OCI-LY7 (cell line): ENCODE measurements at regions of chr19 and their contacts with region 1.

Region 1: GRCh38 chr19:5057861-5058260 is 88.9 kb downstream of the KDM4B start:
- DNase-seq: peak; percentile 41
- H3K4me3 ChIP-seq: no peak overlapping the region
- H3K27ac ChIP-seq: no peak overlapping the region
- H3K4me1 ChIP-seq: no peaks in the 10 kb centered on the region
- CTCF ChIP-seq: no peak

Region 2: DNA sequence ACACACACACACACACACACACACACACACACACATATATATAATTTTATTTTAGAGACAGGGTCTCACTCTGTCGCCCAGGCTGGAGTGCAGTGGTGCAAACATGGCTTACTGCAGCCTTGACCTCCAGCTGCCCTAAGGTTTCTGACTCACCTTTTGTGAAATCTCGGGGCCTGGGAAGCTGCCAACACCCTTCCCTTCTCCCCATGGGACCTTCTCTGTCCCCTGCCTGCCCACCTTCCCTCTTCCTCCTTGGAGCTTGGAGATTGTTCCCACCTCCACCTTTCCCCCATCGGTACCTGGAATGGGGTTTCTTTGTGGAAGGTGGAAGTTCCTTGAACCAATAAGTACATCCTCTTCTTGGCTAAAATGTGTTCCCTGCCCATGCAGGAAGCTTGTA is 161.5 kb before region 1 on chr19:
- CTCF ChIA-PET with region 1: no interaction called
- POLR2A ChIA-PET with region 1: no interaction called
- intact Hi-C with region 1: no loop called
- DNase-seq: no peak
- H3K4me3 ChIP-seq: no peak overlapping the region
- H3K27ac ChIP-seq: no peak overlapping the region
- H3K4me1 ChIP-seq: peaks cover 4% of the 10 kb centered on the region
- CTCF ChIP-seq: no peak

Region 3: GRCh38 chr19:4976401-4977298 is 81.2 kb before region 1 on chr19:
- CTCF ChIA-PET with region 1: no interaction called
- POLR2A ChIA-PET with region 1: no interaction called
- intact Hi-C with region 1: no loop called
- DNase-seq: no peak
- H3K4me3 ChIP-seq: no peak overlapping the region
- H3K27ac ChIP-seq: no peak overlapping the region
- H3K4me1 ChIP-seq: peaks cover 19% of the 10 kb centered on the region
- CTCF ChIP-seq: peak; percentile 45

Region 4: DNA sequence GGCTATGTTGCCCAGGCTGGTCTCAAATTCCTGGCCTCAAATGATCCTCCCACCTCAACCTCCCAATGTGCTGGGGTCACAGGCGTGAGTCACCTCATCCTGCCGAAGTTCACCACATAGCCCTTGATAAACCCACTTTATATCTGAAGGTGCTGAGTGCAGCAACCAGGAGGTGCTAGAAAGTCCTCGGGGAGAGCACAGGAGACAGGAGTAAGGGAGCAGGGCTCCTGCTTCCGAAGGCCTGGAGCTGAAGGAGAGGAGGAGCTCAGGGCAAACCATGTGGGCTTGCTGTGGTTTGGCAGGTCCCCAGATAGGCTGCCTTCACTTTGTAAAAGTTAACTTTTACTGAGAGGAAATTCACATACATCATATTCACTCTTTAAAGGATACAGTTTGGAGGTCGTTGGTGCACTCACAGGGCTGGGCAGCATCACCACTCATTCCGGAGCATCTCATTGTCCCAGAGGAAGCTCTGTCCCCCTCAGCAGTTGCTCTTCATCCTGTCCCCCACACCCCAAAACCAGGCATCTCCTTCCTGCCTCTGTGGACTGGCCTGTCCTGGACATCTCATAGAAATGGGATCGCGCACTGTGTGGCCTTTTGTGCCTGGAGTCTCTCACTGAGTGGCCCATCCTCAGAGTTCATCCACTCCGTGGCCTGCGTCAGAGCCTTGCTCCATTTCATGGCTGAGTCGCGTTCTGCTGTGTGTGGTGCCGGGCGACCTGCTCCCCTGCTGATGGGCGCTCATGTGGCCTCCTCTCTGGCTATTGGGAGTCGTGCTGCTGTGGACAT is 39.4 kb before region 1 on chr19:
- CTCF ChIA-PET with region 1: no interaction called
- POLR2A ChIA-PET with region 1: no interaction called
- intact Hi-C with region 1: no loop called
- DNase-seq: no peak
- H3K4me3 ChIP-seq: no peak overlapping the region
- H3K27ac ChIP-seq: no peak overlapping the region
- H3K4me1 ChIP-seq: no peaks in the 10 kb centered on the region
- CTCF ChIP-seq: no peak

Region 5: GRCh38 chr19:5074407-5074806 is 16.5 kb after region 1 on chr19:
- CTCF ChIA-PET with region 1: no interaction called
- POLR2A ChIA-PET with region 1: no interaction called
- intact Hi-C with region 1: no loop called
- DNase-seq: no peak
- H3K4me3 ChIP-seq: no peak overlapping the region
- H3K27ac ChIP-seq: no peak overlapping the region
- H3K4me1 ChIP-seq: no peaks in the 10 kb centered on the region
- CTCF ChIP-seq: no peak

Region 6: DNA sequence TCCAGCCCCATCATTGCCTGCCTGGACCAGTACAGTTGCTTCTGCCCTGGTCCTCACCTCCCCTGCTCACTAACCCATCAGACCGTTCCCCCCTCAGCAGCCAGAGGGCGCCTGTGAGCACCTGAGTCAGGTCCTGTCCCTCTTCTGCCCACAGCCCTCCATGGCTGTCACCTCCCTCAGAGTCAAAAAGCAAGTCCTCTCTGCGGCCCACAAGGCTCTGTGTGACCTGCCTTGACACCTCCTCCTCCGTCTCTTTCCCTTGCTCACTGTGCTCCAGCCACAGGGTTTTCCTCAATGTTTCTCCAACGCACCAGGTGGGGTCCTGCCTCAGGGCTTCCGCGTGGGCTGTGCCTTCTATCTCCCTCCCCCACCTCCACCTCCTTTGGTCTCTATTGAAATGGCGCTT is 312.1 kb after region 1 on chr19:
- CTCF ChIA-PET with region 1: no interaction called
- POLR2A ChIA-PET with region 1: no interaction called
- intact Hi-C with region 1: loop called (anchors 10 kb)
- DNase-seq: peak; percentile 48
- H3K4me3 ChIP-seq: no peak overlapping the region
- H3K27ac ChIP-seq: no peak overlapping the region
- H3K4me1 ChIP-seq: no peaks in the 10 kb centered on the region
- CTCF ChIP-seq: peak; percentile 83